ENCODE measurements at regions of chr21 and their contacts with region 1.

Region 1: DNA sequence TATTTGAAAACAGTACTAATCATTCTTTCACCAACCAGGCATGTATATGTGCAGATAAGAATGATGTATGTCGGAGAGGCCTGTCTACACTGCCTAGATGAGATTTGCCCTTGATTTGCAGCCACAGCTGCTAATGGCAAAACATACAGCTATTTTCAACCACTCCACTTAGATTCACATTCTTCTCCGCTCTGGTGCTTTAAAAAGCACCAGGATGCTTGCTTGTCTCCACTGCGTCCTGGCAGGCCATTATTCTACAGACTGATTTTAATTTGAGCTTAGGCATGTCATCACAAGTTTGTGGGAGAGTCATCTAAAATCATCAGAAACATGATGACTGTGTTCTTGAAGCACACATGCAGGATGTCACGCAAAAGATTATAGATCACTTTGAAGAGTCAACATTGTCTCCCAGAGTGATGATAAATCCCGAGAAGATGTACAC is 119.0 kb upstream of the NRIP1 start:
- DNase-seq: no peak
- CTCF ChIP-seq: no peak

Region 2: DNA sequence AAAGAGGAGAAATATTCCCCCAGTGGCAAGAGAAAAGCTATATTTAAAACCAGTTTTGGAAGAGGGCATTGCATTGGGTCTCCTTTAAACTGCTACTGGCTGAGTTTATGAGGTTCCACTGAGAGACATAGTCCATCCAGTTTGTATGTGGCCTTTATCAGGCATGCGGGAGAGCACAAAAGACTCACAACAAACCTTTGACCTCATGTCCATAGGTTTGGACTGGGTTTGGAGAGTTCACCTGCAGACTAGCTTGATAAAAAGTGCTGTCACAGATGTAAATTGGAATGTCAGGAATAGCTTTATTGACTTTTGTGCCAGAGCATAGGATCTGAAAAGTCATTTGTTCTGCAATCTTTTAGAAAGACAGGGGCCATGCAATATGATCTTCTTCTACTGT is 11.9 kb after region 1 on chr21:
- CTCF ChIA-PET with region 1: interaction called, 11 read pairs
- POLR2A ChIA-PET with region 1: no interaction called
- DNase-seq: no peak
- CTCF ChIP-seq: no peak